Aorta (tissue), 5 donors: ENCODE measurements at regions of chr11 and their contacts with region 1.

Region 1: GRCh38 chr11:116879800-116880625 is 42.6 kb upstream of the APOA1 start:
- DNase-seq: no peak
- ATAC-seq: peak; percentile 76
- H3K4me3 ChIP-seq: no peak overlapping the region
- H3K27ac ChIP-seq: no peak overlapping the region
- H3K4me1 ChIP-seq: no peaks in the 10 kb centered on the region
- H3K27me3 ChIP-seq: no peaks in the 10 kb centered on the region

Region 2: DNA sequence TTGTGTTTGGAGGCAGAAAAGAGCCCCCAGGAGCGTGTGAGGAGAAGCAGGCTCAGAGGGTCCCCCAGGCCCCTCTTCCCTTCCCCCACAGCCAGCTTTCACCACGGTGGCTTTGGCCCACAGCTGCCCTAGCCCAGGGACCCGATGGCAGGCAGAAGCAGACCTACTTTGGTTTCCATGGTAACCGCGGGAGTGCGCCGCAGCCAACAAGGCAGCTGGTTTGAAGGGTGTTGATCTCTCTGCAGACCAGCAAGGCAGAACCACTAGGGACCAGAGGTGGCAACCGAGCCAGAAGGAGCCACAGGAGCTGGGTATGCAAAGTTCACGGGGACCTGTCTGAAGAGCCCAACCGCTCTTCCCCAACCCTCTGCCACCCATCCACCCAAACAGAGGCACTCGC is 176.6 kb before region 1 on chr11:
- intact Hi-C with region 1: no loop called
- DNase-seq: peak in 1 of 2 donors; percentile 28
- ATAC-seq: no peak
- H3K4me3 ChIP-seq: no peak overlapping the region
- H3K27ac ChIP-seq: no peak overlapping the region
- H3K4me1 ChIP-seq: no peaks in the 10 kb centered on the region
- H3K27me3 ChIP-seq: no peaks in the 10 kb centered on the region

Region 3: DNA sequence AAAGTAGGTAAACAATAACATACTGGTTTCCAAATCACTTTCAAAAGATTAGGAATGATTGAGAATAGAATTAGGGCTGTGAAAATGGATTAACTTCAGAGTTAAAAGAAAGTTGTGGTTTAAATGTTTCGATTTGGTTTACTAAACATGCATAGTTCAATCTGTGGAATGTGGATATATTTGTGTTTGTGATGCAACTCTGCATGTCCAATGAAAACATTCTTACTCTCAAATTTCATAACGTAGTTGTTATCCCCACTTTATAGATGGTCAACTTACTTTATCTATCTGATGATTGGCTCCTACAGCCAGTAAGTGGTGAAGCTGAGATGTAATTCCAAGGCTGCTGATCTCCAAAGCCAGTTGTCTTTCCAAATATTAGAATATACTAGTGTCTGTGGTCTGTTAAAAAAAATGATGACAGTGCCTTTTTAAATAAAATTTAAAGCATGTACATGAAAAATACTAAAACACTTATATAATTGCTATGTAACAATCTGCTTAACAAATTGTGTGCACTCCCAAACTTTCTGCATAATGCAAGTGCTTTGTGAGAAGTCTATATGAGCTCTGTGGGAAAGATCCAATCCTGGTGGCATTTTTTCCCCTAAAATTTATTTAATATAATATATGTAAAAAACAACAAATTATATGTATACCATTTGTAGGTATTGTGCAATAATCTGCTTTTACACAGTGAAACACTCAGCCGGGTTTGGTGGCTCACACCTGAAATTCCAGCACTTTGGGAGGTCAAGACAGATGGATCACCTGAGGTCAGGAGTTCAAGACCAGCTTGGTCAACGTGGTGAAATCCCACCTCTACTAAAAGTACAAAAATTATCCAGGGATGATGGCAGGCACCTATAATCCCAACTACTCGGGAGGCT is 227.9 kb after region 1 on chr11:
- intact Hi-C with region 1: loop called (anchors 1 to 2 kb)
- DNase-seq: no peak
- ATAC-seq: no peak
- H3K4me3 ChIP-seq: no peak overlapping the region
- H3K27ac ChIP-seq: no peak overlapping the region
- H3K4me1 ChIP-seq: no peaks in the 10 kb centered on the region
- H3K27me3 ChIP-seq: no peaks in the 10 kb centered on the region